AG04449 (cell line): ENCODE measurements at regions of chr7 and their contacts with region 1.

Region 1: DNA sequence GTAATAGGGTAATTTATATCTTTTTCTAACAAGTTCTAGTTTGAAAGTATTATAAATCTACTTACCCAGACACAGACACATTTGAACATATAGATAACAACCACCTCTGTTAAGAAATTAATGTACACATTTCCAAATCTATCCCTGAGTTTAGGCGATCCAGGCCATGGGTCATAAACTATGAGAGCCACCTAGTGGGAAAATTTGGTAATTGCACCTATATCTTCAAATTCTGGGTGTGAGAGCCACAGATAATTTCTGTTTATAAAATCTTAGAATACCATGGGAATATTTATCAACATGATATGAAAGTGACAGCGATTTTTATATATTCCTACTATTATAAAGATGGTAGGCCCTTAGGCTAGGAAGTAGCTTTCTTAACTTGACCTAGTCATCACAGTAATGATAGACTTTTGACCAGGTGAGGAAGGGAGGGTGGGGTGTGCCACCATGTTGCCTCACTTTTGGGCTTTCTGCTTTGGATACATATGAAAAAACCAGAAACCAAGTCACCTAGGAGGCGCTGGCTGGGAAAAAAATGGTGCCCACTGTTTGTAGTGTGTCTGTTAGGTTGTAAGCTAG is 8.0 kb upstream of the EPHA1 start:
- DNase-seq: no peak
- H3K4me3 ChIP-seq: no peak overlapping the region
- CTCF ChIP-seq: peak; percentile 48

Region 2: GRCh38 chr7:142739923-142740492 is 676.6 kb before region 1 on chr7:
- CTCF ChIA-PET with region 1: no interaction called
- POLR2A ChIA-PET with region 1: no interaction called
- DNase-seq: no peak
- H3K4me3 ChIP-seq: no peak overlapping the region
- CTCF ChIP-seq: no peak

Region 3: GRCh38 chr7:143305423-143306070 is 111.1 kb before region 1 on chr7:
- CTCF ChIA-PET with region 1: interaction called, 12 read pairs
- POLR2A ChIA-PET with region 1: no interaction called
- DNase-seq: no peak
- H3K4me3 ChIP-seq: no peak overlapping the region
- CTCF ChIP-seq: peak; percentile 73

Region 4: GRCh38 chr7:143391462-143392404 is 24.9 kb before region 1 on chr7:
- CTCF ChIA-PET with region 1: interaction called, 10 read pairs
- POLR2A ChIA-PET with region 1: no interaction called
- DNase-seq: no peak
- H3K4me3 ChIP-seq: no peak overlapping the region; the same call in 1 of the 2 replicates
- CTCF ChIP-seq: no peak

Region 5: GRCh38 chr7:143434660-143435059 is 18.0 kb after region 1 on chr7:
- CTCF ChIA-PET with region 1: interaction called, 16 read pairs
- POLR2A ChIA-PET with region 1: no interaction called
- DNase-seq: no peak
- H3K4me3 ChIP-seq: no peak overlapping the region
- CTCF ChIP-seq: no peak